ENCODE measurements at regions of chr22 and their contacts with region 1.

Region 1: GRCh38 chr22:46013460-46014416 is 36.8 kb upstream of the WNT7B start:
- DNase-seq: peak; percentile 89

Region 2: DNA sequence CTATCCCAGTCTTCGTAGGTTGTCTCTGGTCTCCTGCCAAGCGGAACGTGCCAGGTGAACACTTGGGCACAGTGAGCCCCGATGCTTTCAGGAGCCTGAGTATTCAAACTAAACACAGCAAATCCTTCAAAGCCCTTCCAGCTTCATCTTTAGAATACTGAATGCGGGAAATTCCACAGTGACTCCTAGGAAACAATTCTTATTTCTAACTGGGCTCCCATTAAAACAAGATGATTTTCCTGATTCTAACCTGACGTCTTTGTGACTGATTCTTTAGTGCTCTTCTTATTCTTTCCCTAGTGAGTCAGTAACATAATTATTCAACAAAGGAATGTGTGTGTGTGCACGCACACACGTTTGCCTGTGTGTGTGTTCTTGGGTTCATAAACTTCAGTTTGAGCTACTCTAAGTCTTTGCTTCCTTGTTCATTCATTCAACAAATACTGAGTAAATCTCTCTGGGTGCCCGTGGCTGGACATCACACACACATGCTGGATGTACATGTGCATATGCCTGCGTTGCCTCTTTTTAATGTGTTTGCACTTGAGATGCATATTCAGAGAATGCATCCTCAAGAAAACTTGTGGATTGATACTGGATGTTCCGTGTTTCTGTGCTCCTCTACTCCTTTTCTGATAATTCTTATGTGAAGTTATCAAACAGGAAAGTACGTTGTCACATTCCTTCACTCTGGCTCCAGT is 171.3 kb before region 1 on chr22:
- CTCF ChIA-PET with region 1: no interaction called
- POLR2A ChIA-PET with region 1: no interaction called
- DNase-seq: no peak

Region 3: DNA sequence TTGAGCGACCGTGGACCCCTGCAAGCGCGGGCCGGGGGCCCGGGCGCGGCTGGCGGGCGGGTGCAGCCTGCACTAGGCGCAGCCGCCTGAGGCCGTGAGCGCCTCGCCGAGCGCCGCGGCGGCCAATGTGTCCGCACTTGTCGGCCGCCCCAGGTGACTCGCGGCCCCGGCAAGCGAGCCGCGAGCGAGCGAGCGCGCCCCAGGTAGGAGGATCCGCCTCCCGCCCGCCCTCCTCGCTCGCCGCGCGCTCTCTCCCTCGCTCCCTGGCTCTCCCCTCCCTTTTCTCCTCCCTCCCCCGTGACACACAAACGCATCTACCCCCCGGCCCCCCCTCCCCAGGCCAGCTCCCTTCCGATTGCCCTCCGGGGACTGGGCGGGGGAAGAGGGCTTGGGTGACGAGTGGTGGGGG is 36.7 kb before region 1 on chr22 and contains the start of gene WNT7B:
- CTCF ChIA-PET with region 1: no interaction called
- POLR2A ChIA-PET with region 1: no interaction called
- DNase-seq: no peak

Region 4: DNA sequence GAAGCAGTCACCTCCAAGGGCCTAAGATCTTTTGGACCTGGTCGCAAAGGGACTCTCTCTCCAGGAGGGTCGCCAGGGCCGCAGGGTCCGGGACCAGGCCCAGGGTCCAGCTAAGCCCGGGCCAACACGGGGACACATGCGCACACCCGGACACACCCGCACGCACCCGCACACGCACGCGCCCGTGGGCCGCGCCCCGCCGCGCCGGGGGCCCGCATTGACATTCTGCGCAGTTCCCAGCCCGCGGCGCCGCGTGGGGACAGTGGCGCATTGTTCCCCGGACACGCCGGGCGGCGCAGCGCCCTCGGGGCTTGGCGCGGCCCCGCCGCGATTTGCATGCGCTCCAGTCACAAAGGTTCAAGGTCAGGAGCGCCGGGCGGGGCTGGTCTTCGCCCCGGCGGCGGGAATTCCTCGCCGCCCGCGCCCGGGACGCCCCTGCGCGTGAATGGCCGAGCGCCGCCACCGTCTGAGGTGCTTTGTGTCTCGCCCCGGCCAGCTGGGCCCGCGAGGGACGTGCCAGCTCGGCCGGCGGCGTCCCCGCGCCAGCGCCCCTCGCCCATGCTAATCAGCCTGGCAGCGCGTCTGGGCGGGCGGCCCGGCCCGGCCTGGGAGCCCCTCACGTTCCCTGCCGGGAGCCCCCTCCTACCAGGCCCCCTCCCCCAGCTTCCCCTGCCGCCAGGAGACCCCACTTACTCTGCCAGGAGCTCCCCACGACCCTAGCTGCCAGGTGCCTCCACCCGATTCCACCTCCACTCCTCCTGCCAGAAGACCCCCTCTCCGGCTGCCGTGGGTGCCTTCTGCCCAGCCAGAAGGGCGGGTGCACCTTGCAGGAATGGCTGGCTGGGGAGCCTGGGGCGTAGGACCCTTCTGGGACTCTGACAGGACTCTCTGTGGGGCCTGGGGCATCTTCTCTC is 13.7 kb after region 1 on chr22:
- CTCF ChIA-PET with region 1: no interaction called
- POLR2A ChIA-PET with region 1: interaction called, 24 read pairs
- DNase-seq: no peak

Region 5: GRCh38 chr22:46035742-46036557 is 22.2 kb after region 1 on chr22:
- CTCF ChIA-PET with region 1: interaction called, 7 read pairs
- POLR2A ChIA-PET with region 1: interaction called, 69 read pairs
- DNase-seq: peak; percentile 100

Region 6: GRCh38 chr22:46054091-46055073 is 40.6 kb after region 1 on chr22:
- CTCF ChIA-PET with region 1: no interaction called
- POLR2A ChIA-PET with region 1: interaction called, 15 read pairs
- DNase-seq: peak; percentile 73

Region 7: GRCh38 chr22:46064228-46064965 is 50.7 kb after region 1 on chr22:
- CTCF ChIA-PET with region 1: no interaction called
- POLR2A ChIA-PET with region 1: no interaction called
- DNase-seq: no peak

Region 8: GRCh38 chr22:46148816-46149511 is 135.2 kb after region 1 on chr22:
- CTCF ChIA-PET with region 1: no interaction called
- POLR2A ChIA-PET with region 1: no interaction called
- DNase-seq: no peak